ENCODE measurements at regions of chr22 and their contacts with region 1.

Region 1: DNA sequence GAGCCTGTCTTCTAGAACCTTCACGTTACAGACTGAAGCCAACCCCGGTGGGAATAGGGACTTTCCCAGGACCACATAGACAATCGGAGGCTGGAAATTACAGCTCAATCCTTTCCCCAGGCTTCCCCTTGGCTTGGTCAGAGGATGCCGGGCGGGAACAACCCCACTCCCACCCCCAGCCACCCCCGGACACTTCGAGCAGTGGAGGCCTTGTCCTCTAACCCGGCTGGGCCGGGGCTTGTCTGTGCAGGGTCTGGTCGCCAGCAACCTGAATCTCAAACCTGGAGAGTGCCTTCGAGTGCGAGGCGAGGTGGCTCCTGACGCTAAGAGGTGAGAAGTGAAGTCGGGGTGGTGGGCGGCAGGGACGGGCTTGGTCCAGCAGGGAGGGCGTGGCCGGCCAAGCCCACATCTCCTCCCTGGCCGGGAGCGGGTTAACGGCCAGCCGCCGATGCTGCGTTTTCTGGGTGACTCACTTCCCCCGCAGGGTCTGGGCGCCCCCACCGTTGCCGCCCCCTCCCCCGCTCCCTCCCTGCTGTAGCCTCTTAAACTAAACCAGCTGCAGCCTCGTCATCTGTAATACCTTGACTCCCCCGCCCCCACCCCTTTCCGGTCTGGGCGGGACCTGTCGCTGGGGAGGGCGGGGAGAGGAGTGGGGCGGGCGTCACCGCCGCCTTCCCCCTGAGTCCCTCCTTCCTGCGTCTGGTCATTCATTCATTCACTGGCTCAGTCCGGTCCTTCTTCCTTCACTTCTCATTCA is 1.5 kb downstream of the LGALS1 start:
- DNase-seq: peak; percentile 89
- H3K4me3 Mint-ChIP-seq: peak overlapping the region; percentile 82
- H3K27ac Mint-ChIP-seq: peak overlapping the region; percentile 98
- H3K4me1 Mint-ChIP-seq: peaks cover 55% of the 10 kb centered on the region
- H3K27me3 Mint-ChIP-seq: no peaks in the 10 kb centered on the region

Region 2: DNA sequence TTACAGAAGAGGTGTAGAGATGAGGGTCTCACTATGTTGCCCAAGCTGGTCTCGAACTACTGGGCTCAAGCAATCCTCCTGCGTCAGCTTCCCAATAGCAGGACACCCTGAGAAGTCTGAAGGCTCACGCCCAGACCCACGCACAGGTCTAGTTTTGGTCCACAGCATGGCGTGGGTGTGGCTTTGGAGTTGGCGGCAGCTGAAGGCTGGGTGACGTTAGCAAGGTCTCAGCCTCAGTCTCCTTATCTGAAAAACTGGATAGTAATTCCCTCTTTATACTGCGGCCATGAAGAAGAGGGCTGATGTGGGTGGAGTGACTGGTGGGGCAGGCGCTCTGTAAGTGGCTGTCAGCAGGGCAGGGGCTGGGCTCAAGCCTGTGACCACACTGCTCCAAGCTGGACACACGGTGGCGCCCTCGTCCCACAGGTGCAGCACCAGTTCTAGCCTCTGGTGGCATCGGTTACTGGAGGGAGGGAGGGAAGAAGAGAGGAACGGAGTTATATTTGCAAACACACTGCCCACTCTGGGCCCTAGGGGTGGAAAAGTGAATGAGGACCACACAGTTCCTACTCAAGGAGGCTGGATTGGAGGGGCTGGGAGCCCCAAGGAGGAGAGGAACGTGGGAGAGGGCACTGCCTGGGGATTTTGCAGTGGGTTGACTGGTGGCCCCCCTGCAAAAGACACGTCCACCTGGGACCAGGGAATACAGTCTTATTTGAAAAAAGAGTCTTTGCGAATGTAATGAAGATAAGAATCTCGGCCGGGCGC is 138.1 kb before region 1 on chr22:
- intact Hi-C with region 1: loop called (anchors 5 kb)
- DNase-seq: peak; percentile 83
- H3K4me3 Mint-ChIP-seq: peak overlapping the region; percentile 41
- H3K27ac Mint-ChIP-seq: peak overlapping the region; percentile 50
- H3K4me1 Mint-ChIP-seq: peaks cover 40% of the 10 kb centered on the region
- H3K27me3 Mint-ChIP-seq: peaks cover 13% of the 10 kb centered on the region

Region 3: DNA sequence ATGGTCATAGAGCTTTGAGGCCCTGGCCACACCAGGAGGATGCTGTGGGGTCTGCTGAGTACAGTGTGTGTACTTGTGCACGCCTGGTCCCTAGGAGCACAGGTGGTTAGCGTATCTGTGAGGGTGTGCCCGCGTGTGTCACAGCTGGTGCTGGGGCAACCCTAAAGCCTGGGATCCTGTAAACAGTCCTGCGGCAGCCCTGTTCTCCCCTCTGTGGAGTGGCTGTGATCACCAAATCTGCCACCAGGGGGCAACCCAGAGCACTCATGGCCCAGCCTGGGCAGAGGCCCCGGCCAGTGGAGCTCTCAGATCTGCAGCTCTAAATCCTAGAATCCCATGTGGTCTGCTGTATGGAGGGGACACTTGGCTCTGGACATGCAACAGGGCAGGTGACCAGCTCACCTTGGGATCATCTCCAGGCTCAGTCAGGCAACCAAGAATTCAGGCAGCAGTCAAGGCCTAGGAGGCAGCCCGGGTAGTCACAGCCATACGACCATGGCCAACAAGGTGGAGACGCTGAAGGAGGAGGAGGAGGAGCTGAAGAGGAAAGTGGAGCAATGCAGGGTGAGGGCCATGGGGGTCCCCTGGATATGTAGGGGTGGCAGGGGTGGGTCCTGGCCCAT is 33.6 kb before region 1 on chr22:
- intact Hi-C with region 1: loop called (anchors 1 kb)
- DNase-seq: peak; percentile 74
- H3K4me3 Mint-ChIP-seq: peak overlapping the region; percentile 59
- H3K27ac Mint-ChIP-seq: peak overlapping the region; percentile 52
- H3K4me1 Mint-ChIP-seq: peaks cover 26% of the 10 kb centered on the region
- H3K27me3 Mint-ChIP-seq: no peaks in the 10 kb centered on the region

Region 4: DNA sequence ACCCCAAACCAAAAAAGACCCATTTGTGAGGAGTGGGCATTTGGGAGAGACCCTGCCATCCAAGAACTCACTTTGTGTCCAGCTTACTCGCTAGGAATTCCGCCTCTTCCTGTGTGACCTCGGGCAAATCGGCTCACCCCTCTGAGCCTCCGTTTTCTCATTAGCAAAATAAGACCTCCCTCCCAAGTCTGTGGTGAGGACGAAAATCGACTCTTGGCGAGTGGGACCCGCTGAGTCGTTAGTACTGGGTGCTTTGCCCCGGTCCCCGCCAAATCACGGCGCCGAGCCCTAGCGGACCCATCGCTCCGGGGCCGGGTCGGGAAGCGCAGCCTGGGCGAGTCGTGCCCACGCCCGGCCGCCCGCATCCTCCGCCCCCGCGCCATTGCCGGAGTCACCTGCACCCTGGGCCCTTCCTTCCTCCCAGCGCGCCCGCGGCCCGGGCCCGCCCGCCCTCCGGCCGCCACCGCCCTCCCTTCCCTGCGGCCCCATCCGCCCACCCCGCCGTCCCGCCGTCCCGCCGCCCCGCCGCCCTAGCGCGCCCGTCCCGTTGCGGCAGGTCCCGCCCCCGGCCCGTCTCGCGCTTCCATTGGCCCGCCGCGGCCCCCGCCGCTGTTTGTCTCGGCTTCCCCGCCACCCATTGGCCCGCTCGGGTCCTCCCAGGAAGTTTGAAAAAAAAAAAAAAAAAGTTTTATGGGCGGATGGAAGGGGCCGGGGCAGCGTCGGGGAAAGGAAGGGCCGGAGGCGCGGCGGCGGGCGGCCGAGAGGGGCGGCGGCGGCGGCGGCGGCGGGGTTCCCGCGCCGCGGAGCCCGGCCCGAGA is 68.8 kb after region 1 on chr22:
- intact Hi-C with region 1: loop called (anchors 1 kb)
- DNase-seq: peak; percentile 85
- H3K4me3 Mint-ChIP-seq: peak overlapping the region; percentile 83
- H3K27ac Mint-ChIP-seq: peak overlapping the region; percentile 74
- H3K4me1 Mint-ChIP-seq: peaks cover 25% of the 10 kb centered on the region
- H3K27me3 Mint-ChIP-seq: no peaks in the 10 kb centered on the region

Region 5: GRCh38 chr22:37812869-37813678 is 136.2 kb after region 1 on chr22:
- intact Hi-C with region 1: no loop called
- DNase-seq: no peak
- H3K4me3 Mint-ChIP-seq: no peak overlapping the region
- H3K27ac Mint-ChIP-seq: no peak overlapping the region
- H3K4me1 Mint-ChIP-seq: peaks cover 14% of the 10 kb centered on the region
- H3K27me3 Mint-ChIP-seq: no peaks in the 10 kb centered on the region

Region 6: GRCh38 chr22:37824674-37825641 is 148.0 kb after region 1 on chr22:
- intact Hi-C with region 1: no loop called
- DNase-seq: no peak
- H3K4me3 Mint-ChIP-seq: peak overlapping the region; percentile 72
- H3K27ac Mint-ChIP-seq: no peak overlapping the region
- H3K4me1 Mint-ChIP-seq: no peaks in the 10 kb centered on the region
- H3K27me3 Mint-ChIP-seq: peaks cover 24% of the 10 kb centered on the region

Region 7: DNA sequence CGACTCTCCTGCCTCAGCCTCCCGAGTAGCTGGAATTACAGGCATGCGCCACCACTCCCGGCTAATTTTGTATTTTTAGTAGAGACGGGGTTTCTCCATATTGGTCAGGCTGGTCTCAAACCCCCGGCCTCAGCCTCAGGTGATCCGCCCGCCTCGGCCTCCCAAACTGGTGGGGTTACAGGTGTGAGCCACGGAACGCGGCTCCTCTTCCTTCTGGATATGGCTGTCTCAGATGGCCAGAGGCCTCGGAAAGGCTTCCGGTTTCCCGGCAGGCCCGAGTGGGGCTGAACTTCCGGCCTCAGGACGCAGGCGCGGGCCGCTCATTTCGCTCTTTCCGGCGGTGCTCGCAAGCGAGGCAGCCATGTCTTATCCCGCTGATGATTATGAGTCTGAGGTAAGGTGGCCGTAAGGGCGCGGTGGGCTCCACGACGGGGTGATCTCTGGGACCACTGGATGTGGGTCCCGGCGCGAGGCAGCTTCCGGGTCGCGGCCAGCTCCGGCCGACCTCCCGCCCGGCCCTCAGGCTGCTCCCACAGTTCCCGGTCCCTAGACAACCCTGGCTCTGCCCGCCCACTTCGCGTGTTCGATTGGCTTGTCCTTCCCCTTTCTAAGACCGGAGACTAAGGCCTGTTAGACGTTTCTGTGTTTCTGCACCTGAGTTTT is 172.3 kb after region 1 on chr22 and contains the start of gene EIF3L:
- intact Hi-C with region 1: loop called (anchors 1 kb)
- DNase-seq: peak; percentile 89
- H3K4me3 Mint-ChIP-seq: peak within 1 kb of the TSS; percentile 97
- H3K27ac Mint-ChIP-seq: peak within 1 kb of the TSS; percentile 96
- H3K4me1 Mint-ChIP-seq: peaks cover 49% of the 10 kb centered on the region
- H3K27me3 Mint-ChIP-seq: no peaks in the 10 kb centered on the region
- total RNA-seq, gene EIF3L: 433 and 441 TPM in 2 replicates

Measured in activated T-helper 1 cell treated with anti-CD3 and anti-CD28 coated beads, Interleukin-12 subunit alpha, Interleukin-12 subunit beta, Interleukin-2, Interleukin-4 antibody, amounts not matched to agents 30 ng/mL and 10 ng/mL and 1 ng/mL, durations not matched to agents 14 hours and 24 hours and 36 hours (primary cell).